Right ventricle myocardium superior (tissue), 1 donor: ENCODE measurements at regions of chr4 and their contacts with region 1.

Region 1: GRCh38 chr4:37686373-37687193 is at the start of gene RELL1:
- DNase-seq: peak; percentile 100
- ATAC-seq: peak; percentile 96
- total RNA-seq, gene RELL1: 15.8 TPM

Region 2: DNA sequence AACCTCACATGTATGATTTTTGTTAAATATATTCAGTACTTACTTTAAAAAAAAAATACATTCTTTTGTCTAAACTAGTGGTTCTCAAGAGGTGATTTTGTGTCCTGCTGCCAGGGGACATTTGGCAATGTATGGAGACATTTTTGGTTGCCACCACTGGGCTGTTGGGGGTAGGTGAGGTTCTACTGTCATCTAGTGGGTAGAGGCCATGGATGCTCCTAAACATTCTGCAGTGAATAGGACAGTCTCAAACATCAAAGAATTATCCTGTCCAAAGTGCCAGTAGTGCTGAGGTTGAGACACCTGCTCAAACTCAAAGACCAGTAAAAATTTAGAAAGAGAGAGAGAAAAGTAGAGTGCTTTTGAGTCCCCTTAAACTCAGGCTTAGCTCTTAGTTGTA is 107.0 kb after region 1 on chr4:
- intact Hi-C with region 1: loop called (anchors 10 kb)
- DNase-seq: no peak
- ATAC-seq: peak; percentile 87

Region 3: DNA sequence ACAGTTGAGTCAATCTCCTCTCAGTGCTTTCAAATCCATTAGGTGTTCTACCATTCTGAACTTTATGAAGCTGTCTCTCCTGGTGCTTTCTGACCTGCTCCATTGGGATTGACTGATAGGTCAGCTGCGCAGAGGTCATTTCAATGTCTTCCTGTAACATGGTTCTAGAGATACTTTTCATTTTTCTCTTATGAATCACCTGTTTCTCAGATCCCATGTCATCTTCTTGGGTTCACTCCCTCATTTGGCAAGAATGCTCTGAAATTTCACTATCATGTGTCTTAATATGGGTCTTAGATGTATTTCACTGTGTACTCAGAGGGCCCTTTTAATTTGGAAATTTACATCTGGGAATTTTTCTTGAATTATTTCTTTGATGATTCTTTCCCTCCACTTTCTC is 126.1 kb after region 1 on chr4:
- intact Hi-C with region 1: no loop called
- DNase-seq: no peak
- ATAC-seq: no peak